ENCODE measurements at regions of chr12 and their contacts with region 1.

Region 1: DNA sequence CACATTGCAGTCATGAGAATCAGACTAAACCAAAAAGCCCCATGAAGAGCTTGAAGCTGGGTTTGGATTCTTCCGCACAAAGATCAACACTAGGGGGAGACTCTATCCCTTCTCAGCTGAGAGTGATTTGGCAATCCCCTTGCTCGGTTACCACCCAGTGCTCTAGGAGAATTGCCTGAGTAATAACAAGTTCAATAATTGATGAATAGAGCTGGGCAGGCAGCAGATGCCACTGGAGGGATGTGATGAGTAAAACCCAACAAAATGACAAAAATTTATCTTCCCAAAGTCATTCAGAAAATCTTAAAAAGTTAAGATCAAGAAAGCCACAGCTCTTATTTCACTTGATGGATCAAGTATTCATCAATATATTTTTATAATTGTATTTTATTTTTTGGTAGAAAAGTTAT is 185.6 kb upstream of the ARID2 start:
- DNase-seq: peak; percentile 58
- H3K4me3 Mint-ChIP-seq: no peak overlapping the region
- H3K27ac Mint-ChIP-seq: no peak overlapping the region
- H3K4me1 Mint-ChIP-seq: peaks cover 1% of the 10 kb centered on the region
- H3K27me3 Mint-ChIP-seq: peaks cover 2% of the 10 kb centered on the region

Region 2: DNA sequence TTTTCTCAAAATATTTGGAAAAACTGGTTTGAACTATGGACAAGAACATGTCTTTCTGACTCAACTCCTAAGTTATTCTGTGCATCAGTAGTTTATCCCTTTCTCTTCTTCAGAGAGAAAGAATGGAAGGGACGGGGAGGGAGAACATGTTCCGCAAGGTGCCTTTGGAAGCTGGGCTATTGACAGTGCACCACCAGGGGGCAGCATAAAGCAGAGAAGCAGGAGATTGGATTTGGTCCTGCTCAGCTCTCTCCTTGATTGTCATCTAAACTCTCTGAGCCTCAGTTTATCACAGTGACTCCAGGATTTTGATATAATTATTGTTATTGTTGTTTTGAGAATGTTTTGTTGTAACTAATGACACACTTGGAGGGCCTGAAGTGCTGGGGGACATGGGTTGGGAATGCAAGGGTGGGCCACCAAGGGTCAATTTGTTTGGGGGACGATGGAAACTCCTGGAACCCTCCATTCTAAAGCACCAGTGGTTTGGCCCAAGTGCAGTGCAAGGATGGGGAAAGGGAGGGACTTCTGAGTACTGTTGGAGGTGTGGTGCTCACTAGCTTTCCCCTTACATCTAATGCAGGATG is 373.4 kb before region 1 on chr12:
- CTCF ChIA-PET with region 1: interaction called, 13 read pairs
- POLR2A ChIA-PET with region 1: no interaction called
- intact Hi-C with region 1: loop called (anchors 5 kb)
- DNase-seq: peak; percentile 84
- H3K4me3 Mint-ChIP-seq: no peak overlapping the region
- H3K27ac Mint-ChIP-seq: no peak overlapping the region
- H3K4me1 Mint-ChIP-seq: no peaks in the 10 kb centered on the region
- H3K27me3 Mint-ChIP-seq: no peaks in the 10 kb centered on the region

Region 3: GRCh38 chr12:45532113-45532512 is 11.8 kb before region 1 on chr12:
- CTCF ChIA-PET with region 1: interaction called, 27 read pairs
- POLR2A ChIA-PET with region 1: no interaction called
- intact Hi-C with region 1: no loop called
- DNase-seq: no peak
- H3K4me3 Mint-ChIP-seq: no peak overlapping the region
- H3K27ac Mint-ChIP-seq: no peak overlapping the region
- H3K4me1 Mint-ChIP-seq: no peaks in the 10 kb centered on the region
- H3K27me3 Mint-ChIP-seq: peaks cover under 1% of the 10 kb centered on the region

Region 4: GRCh38 chr12:45680362-45680761 is 136.5 kb after region 1 on chr12:
- CTCF ChIA-PET with region 1: interaction called, 10 read pairs
- POLR2A ChIA-PET with region 1: no interaction called
- intact Hi-C with region 1: no loop called
- DNase-seq: no peak
- H3K4me3 Mint-ChIP-seq: no peak overlapping the region
- H3K27ac Mint-ChIP-seq: no peak overlapping the region
- H3K4me1 Mint-ChIP-seq: no peaks in the 10 kb centered on the region
- H3K27me3 Mint-ChIP-seq: peaks cover 4% of the 10 kb centered on the region

Region 5: DNA sequence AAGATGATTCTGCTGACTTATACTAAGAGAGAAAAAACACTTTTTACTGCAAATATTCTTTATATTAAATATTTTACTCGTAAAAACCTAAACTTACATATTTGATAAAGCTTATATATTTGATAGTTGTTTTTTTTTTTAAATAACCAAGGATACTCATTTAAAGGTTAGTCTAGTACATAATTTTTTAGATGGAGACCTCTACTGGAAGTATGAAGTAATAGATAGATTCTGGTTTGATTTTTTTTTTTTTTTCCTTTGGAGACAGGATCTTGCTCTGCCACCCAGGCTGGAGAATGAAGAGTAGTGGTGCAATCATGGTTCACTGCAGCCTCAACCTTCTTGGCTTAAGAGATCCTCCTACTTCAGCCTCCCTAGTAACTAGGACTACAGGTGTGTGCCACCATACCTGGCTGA is 202.0 kb after region 1 on chr12:
- CTCF ChIA-PET with region 1: interaction called, 44 read pairs
- POLR2A ChIA-PET with region 1: no interaction called
- intact Hi-C with region 1: loop called (anchors 5 kb)
- DNase-seq: no peak
- H3K4me3 Mint-ChIP-seq: no peak overlapping the region
- H3K27ac Mint-ChIP-seq: no peak overlapping the region
- H3K4me1 Mint-ChIP-seq: peaks cover 40% of the 10 kb centered on the region
- H3K27me3 Mint-ChIP-seq: no peaks in the 10 kb centered on the region

Region 6: GRCh38 chr12:45756666-45757065 is 212.8 kb after region 1 on chr12:
- CTCF ChIA-PET with region 1: interaction called, 12 read pairs
- POLR2A ChIA-PET with region 1: no interaction called
- intact Hi-C with region 1: no loop called
- DNase-seq: no peak
- H3K4me3 Mint-ChIP-seq: no peak overlapping the region
- H3K27ac Mint-ChIP-seq: no peak overlapping the region
- H3K4me1 Mint-ChIP-seq: peaks cover 26% of the 10 kb centered on the region
- H3K27me3 Mint-ChIP-seq: no peaks in the 10 kb centered on the region

Region 7: GRCh38 chr12:45893240-45893639 is 349.3 kb after region 1 on chr12:
- CTCF ChIA-PET with region 1: interaction called, 5 read pairs
- POLR2A ChIA-PET with region 1: no interaction called
- intact Hi-C with region 1: loop called (anchors 10 kb)
- DNase-seq: no peak
- H3K4me3 Mint-ChIP-seq: no peak overlapping the region
- H3K27ac Mint-ChIP-seq: no peak overlapping the region
- H3K4me1 Mint-ChIP-seq: peaks cover 14% of the 10 kb centered on the region
- H3K27me3 Mint-ChIP-seq: no peaks in the 10 kb centered on the region